ENCODE measurements at regions of chr18 and their contacts with region 1.

Region 1: GRCh38 chr18:50194631-50195532 is at the start of gene MYO5B:
- DNase-seq: peak; percentile 75 to 87
- H3K4me3 ChIP-seq: peak within 1 kb of the TSS; percentile 74
- H3K4me3 Mint-ChIP-seq: peak within 1 kb of the TSS; percentile 93
- H3K27ac Mint-ChIP-seq: peak within 1 kb of the TSS; percentile 72
- H3K4me1 ChIP-seq: no peaks in the 10 kb centered on the region
- H3K4me1 Mint-ChIP-seq: no peaks in the 10 kb centered on the region
- H3K27me3 ChIP-seq: no peaks in the 10 kb centered on the region
- H3K27me3 Mint-ChIP-seq: no peaks in the 10 kb centered on the region
- CTCF ChIP-seq: peak in 1 of 2 experiments; percentile 20
- total RNA-seq, gene MYO5B: 28.3 and 28.6 TPM in 2 replicates

Region 2: DNA sequence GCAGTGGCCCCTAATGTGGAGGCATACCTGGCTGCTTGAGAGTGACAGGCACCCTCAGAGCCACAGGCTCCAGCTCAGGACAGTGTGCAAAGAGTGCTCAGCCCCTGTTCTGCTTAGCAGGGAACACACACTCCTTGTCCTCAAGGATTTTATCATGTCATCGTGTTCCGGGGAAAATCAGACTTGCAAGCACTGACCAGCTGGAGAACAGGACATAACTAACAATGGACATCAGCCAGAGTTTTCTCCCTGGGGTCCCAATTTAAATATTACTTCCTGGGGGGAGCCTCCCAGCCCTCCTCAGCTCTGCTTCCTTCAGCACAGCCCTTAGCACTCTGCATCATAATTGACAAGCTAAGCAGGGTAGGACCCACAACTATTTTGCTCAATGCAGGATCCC is 206.1 kb before region 1 on chr18:
- CTCF ChIA-PET with region 1: no interaction called
- POLR2A ChIA-PET with region 1: no interaction called
- intact Hi-C with region 1: no loop called
- DNase-seq: no peak
- H3K4me3 ChIP-seq: no peak overlapping the region
- H3K4me3 Mint-ChIP-seq: no peak overlapping the region
- H3K27ac Mint-ChIP-seq: no peak overlapping the region
- H3K4me1 ChIP-seq: no peaks in the 10 kb centered on the region
- H3K4me1 Mint-ChIP-seq: no peaks in the 10 kb centered on the region
- H3K27me3 ChIP-seq: no peaks in the 10 kb centered on the region
- H3K27me3 Mint-ChIP-seq: no peaks in the 10 kb centered on the region
- CTCF ChIP-seq: no peak

Region 3: GRCh38 chr18:50051288-50051687 is 143.6 kb before region 1 on chr18:
- CTCF ChIA-PET with region 1: interaction called, 4 read pairs
- POLR2A ChIA-PET with region 1: no interaction called
- intact Hi-C with region 1: loop called (anchors 2 kb)
- DNase-seq: peak in 1 of 2 experiments; percentile 14
- H3K4me3 ChIP-seq: no peak overlapping the region
- H3K4me3 Mint-ChIP-seq: no peak overlapping the region
- H3K27ac Mint-ChIP-seq: no peak overlapping the region
- H3K4me1 ChIP-seq: no peaks in the 10 kb centered on the region
- H3K4me1 Mint-ChIP-seq: no peaks in the 10 kb centered on the region
- H3K27me3 ChIP-seq: no peaks in the 10 kb centered on the region
- H3K27me3 Mint-ChIP-seq: no peaks in the 10 kb centered on the region
- CTCF ChIP-seq: peak in 1 of 2 experiments; percentile 32

Region 4: DNA sequence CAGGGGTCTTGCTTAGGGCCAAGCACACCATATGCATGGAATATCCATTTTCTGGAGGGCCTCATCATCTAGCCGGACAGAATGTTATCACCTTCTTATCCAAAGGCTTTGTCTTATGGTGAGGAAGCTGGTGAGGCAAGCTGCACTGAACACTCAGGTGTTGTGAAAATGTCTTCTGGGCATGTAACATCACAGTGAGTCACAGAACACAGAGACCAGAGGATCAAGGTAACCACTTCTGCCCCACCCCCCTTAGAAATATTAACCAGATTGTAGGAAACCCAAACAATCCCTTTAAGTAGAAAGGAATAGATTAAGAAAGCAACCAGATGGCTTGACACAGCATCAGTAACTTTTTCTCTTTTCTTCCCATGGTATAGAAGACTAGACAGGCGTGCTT is 51.0 kb before region 1 on chr18:
- CTCF ChIA-PET with region 1: no interaction called
- POLR2A ChIA-PET with region 1: no interaction called
- intact Hi-C with region 1: loop called (anchors 2 kb)
- DNase-seq: no peak
- H3K4me3 ChIP-seq: no peak overlapping the region
- H3K4me3 Mint-ChIP-seq: no peak overlapping the region
- H3K27ac Mint-ChIP-seq: no peak overlapping the region
- H3K4me1 ChIP-seq: peaks cover 13% of the 10 kb centered on the region
- H3K4me1 Mint-ChIP-seq: no peaks in the 10 kb centered on the region
- H3K27me3 ChIP-seq: no peaks in the 10 kb centered on the region
- H3K27me3 Mint-ChIP-seq: no peaks in the 10 kb centered on the region
- CTCF ChIP-seq: no peak

Region 5: GRCh38 chr18:50154420-50154819 is 40.5 kb before region 1 on chr18:
- CTCF ChIA-PET with region 1: no interaction called
- POLR2A ChIA-PET with region 1: no interaction called
- intact Hi-C with region 1: no loop called
- DNase-seq: peak in 1 of 2 experiments; percentile 2
- H3K4me3 ChIP-seq: no peak overlapping the region
- H3K4me3 Mint-ChIP-seq: no peak overlapping the region
- H3K27ac Mint-ChIP-seq: no peak overlapping the region
- H3K4me1 ChIP-seq: peaks cover 24% of the 10 kb centered on the region
- H3K4me1 Mint-ChIP-seq: peaks cover 28% of the 10 kb centered on the region
- H3K27me3 ChIP-seq: no peaks in the 10 kb centered on the region
- H3K27me3 Mint-ChIP-seq: no peaks in the 10 kb centered on the region
- CTCF ChIP-seq: no peak

Region 6: GRCh38 chr18:50330176-50330575 is 135.3 kb after region 1 on chr18:
- CTCF ChIA-PET with region 1: no interaction called
- POLR2A ChIA-PET with region 1: no interaction called
- intact Hi-C with region 1: no loop called
- DNase-seq: no peak
- H3K4me3 ChIP-seq: no peak overlapping the region
- H3K4me3 Mint-ChIP-seq: no peak overlapping the region
- H3K27ac Mint-ChIP-seq: no peak overlapping the region
- H3K4me1 ChIP-seq: no peaks in the 10 kb centered on the region
- H3K4me1 Mint-ChIP-seq: no peaks in the 10 kb centered on the region
- H3K27me3 ChIP-seq: no peaks in the 10 kb centered on the region
- H3K27me3 Mint-ChIP-seq: peaks cover 6% of the 10 kb centered on the region
- CTCF ChIP-seq: no peak